AG04449 (cell line): ENCODE measurements at regions of chr5 and their contacts with region 1.

Region 1: DNA sequence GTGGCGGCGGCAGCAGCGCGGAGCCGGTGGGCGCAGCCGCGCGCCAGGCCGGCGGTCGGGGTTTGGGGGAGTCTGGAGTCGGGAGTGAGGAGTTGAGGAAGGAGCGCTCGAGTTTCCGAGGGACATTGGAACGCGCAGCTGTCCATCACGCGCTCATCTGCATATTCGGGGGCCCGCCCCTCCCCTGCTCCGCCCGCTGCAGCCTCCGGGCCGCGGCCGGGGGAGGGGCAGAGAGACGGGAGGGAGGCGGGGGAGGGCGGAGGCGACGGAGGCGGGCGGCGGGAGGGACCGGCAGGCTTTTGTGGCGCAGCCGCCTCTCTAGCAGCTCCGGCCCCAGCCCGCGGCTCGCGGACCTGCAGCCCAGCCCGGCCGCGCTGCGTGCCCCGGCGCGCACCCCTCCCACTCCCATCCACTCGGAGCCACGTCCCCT is at the start of gene IRX2:
- DNase-seq: peak; percentile 90
- H3K4me3 ChIP-seq: peak within 1 kb of the TSS; percentile 77
- CTCF ChIP-seq: no peak

Region 2: GRCh38 chr5:2739360-2740050 is 12.1 kb before region 1 on chr5:
- CTCF ChIA-PET with region 1: interaction called, 5 read pairs
- POLR2A ChIA-PET with region 1: interaction called, 40 read pairs
- DNase-seq: no peak
- H3K4me3 ChIP-seq: peak overlapping the region; percentile 61
- CTCF ChIP-seq: no peak

Region 3: DNA sequence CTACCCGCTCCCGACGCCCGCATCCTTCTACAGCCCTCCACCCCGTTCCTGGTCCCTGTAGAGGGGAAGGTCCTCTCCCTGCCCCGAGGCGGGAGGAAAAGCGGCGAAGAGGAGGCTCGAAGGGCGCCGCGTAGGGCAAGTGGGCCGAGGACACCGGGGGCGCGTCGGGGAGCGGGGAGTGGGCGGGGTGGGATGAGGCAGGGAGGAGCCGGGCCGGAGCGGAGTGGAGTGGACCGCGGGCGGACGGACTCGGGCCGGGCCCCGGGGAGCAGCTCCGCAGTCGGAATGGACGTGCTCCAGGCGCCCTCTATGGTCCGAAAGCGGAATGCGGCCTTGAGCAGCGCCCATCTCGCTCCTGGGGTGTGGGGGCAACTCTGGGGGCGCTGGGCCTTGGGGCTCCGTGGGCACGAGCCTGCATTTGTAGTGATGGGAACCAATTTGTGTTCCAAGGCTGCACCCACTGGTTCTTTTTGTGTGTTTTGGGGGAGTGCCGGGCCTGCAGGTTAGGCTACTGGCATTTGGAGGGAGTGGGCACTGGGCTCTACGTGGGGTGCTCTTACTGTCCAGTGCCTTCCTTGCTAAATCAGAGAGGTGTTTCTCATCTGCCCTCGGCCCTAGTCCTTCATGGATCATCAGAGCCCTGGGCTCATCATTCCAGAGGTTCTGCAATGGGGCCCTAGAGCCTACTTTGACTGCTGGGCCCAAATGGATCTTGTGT is 851.3 kb after region 1 on chr5:
- CTCF ChIA-PET with region 1: interaction called, 3 read pairs
- POLR2A ChIA-PET with region 1: interaction called, 18 read pairs
- DNase-seq: no peak
- H3K4me3 ChIP-seq: peak overlapping the region; percentile 69
- CTCF ChIP-seq: peak; percentile 90